ENCODE measurements at regions of chr16 and their contacts with region 1.

Region 1: GRCh38 chr16:73285436-73286201 is 237.7 kb upstream of the ZFHX3 start:
- DNase-seq: no peak
- ATAC-seq: no peak
- H3K4me3 ChIP-seq: no peak overlapping the region
- H3K27ac ChIP-seq: no peak overlapping the region
- H3K4me1 ChIP-seq: no peaks in the 10 kb centered on the region
- H3K27me3 ChIP-seq: peaks cover 4 to 17% of the 10 kb centered on the region in 2 experiments
- CTCF ChIP-seq: no peak
- EP300 ChIP-seq: no peak
- POLR2A ChIP-seq: no peak
- RAD21 ChIP-seq: no peak

Region 2: GRCh38 chr16:73113336-73113735 is 172.3 kb before region 1 on chr16:
- CTCF ChIA-PET with region 1: no interaction called
- POLR2A ChIA-PET with region 1: no interaction called
- in situ Hi-C with region 1: no loop called
- intact Hi-C with region 1: no loop called
- DNase-seq: no peak
- ATAC-seq: no peak
- H3K4me3 ChIP-seq: no peak overlapping the region
- H3K27ac ChIP-seq: no peak overlapping the region
- H3K4me1 ChIP-seq: no peaks in the 10 kb centered on the region
- H3K27me3 ChIP-seq: peaks cover 0 to 6% of the 10 kb centered on the region in 2 experiments; a peak in 1 of 5 replicates
- CTCF ChIP-seq: no peak
- EP300 ChIP-seq: no peak
- POLR2A ChIP-seq: no peak
- RAD21 ChIP-seq: no peak

Region 3: GRCh38 chr16:73311916-73312315 is 26.3 kb after region 1 on chr16:
- CTCF ChIA-PET with region 1: no interaction called
- POLR2A ChIA-PET with region 1: no interaction called
- in situ Hi-C with region 1: no loop called
- intact Hi-C with region 1: loop called (anchors 1 kb)
- DNase-seq: no peak
- ATAC-seq: no peak
- H3K4me3 ChIP-seq: no peak overlapping the region
- H3K27ac ChIP-seq: no peak overlapping the region
- H3K4me1 ChIP-seq: no peaks in the 10 kb centered on the region
- H3K27me3 ChIP-seq: peaks cover 0 to 12% of the 10 kb centered on the region in 2 experiments; a peak in 2 of 5 replicates
- CTCF ChIP-seq: no peak
- EP300 ChIP-seq: no peak
- POLR2A ChIP-seq: no peak
- RAD21 ChIP-seq: no peak